Adrenal gland (tissue), 19 donors: ENCODE measurements at regions of chr11 and their contacts with region 1.

Region 1: DNA sequence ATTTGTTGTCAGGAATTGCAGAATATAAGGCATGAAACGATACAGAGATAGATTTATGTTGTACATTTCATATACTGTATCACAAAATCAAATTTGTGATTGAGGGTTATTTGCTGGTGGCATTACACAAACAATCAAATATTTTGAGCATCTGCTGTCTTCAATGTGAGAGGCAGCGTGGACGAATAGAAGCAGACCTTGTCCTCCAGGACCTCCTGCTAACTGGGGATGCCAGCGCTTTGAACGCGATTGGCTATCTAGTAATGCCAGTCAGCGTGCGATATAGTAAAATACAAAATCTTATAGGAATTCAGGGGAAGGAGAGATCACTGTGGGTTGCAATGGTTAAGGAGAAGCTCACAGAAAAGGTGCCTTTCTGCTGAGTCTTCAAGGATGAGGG is 631 bp upstream of the SNX19 start:
- DNase-seq: no peak
- H3K4me3 ChIP-seq: peak overlapping the region in 3 of 4 donors; percentile 19 to 93 (median 92)
- H3K27ac ChIP-seq: peak overlapping the region in 3 of 5 donors; percentile 85 to 93 (median 87)
- H3K4me1 ChIP-seq: peaks cover 12% of the 10 kb centered on the region in 2 donors
- H3K27me3 ChIP-seq: no peaks in the 10 kb centered on the region
- CTCF ChIP-seq: no peak
- POLR2A ChIP-seq: no peak

Region 2: DNA sequence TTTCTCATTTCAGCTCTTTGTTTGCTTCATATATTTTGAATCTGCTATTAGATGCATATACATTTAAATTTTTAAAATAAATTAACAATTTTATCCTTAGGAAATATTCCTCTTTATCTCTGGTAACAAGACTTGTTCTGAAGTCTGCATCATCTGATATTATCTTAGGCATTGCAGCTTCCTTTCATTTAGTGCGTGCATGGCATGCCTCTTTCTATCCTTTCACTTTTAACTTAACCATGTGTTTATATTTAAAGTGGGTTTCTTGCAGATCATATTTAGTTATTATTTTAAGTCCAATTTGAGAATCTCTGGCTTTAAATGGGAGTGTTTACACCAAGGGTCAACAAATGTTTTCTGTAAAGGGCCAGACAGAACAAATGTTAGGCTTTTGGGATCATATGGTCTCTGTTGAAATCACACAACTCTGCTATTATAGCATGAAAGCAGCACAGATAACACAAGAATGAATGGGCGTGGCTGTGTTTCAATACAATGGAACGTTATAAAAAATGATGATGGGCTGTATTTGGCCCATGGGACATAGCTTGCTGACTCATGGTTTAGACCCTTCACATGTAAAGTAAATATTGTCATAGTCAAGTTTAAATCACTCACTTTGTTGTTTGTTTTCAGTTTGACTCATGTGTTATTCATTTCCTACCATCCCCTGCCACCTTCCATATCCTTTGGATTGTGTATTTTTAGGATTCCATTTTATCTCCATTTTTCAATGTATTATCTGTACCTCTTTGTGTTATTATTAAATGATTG is 83.3 kb after region 1 on chr11:
- intact Hi-C with region 1: no loop called
- DNase-seq: no peak
- H3K4me3 ChIP-seq: no peak overlapping the region
- H3K27ac ChIP-seq: no peak overlapping the region
- H3K4me1 ChIP-seq: no peaks in the 10 kb centered on the region
- H3K27me3 ChIP-seq: peaks cover 2% of the 10 kb centered on the region
- CTCF ChIP-seq: no peak
- POLR2A ChIP-seq: no peak

Region 3: DNA sequence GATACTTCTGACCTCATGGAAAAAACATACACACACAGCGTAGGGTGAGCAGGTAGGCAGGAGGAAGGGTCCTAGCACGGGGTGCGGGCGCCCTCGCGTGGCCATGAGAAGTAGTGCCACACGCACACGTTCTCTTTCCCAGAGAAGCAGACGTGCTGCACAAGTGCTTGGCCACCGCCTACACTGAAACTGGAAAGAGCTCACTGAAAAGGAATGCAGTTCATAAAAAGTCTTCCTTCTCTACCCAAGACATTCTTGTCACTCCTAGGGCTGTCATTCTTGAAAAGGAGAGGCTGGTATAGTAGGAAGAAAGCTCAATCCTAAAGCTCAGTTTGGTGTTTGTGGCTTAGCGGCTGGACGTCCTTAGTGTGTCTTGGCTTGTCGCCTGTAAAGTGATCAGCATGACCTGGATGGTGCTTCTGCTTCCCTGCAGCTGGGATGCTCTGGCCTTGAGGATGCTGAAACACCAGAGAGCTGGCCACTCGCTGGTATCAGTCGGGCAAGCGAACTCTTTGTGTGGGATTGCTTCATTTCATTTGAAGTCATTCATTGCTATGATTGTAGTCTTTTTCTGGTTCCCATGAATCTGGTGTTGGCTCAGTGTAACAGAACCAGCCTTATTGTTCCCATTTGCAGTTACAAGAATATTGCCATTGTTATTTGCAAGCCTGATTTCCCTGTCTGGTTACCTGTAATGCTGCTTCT is 757.3 kb after region 1 on chr11:
- intact Hi-C with region 1: loop called in 1 of 2 experiments (anchors 2 kb)
- DNase-seq: peak; percentile 50 to 91 (median 76)
- H3K4me3 ChIP-seq: no peak overlapping the region
- H3K27ac ChIP-seq: no peak overlapping the region
- H3K4me1 ChIP-seq: no peaks in the 10 kb centered on the region
- H3K27me3 ChIP-seq: no peaks in the 10 kb centered on the region
- CTCF ChIP-seq: peak; percentile 89 to 97 (median 93)
- POLR2A ChIP-seq: no peak